Esophagus muscularis mucosa (tissue), 4 donors: ENCODE measurements at regions of chr5 and their contacts with region 1.

Region 1: GRCh38 chr5:160399402-160400353 is at the start of gene FAM200C:
- DNase-seq: peak; percentile 94
- H3K4me3 ChIP-seq: peak within 1 kb of the TSS; percentile 54 to 83 (median 76)
- H3K27ac ChIP-seq: peak within 1 kb of the TSS; percentile 84 to 93 (median 88)
- H3K4me1 ChIP-seq: peaks cover 15 to 43% (median 37%) of the 10 kb centered on the region in 4 donors
- H3K27me3 ChIP-seq: no peaks in the 10 kb centered on the region
- CTCF ChIP-seq: no peak
- EP300 ChIP-seq: no peak
- POLR2A ChIP-seq: peak; percentile 81
- total RNA-seq, gene FAM200C: 3.0 to 9.6 (median 5.8) TPM

Region 2: DNA sequence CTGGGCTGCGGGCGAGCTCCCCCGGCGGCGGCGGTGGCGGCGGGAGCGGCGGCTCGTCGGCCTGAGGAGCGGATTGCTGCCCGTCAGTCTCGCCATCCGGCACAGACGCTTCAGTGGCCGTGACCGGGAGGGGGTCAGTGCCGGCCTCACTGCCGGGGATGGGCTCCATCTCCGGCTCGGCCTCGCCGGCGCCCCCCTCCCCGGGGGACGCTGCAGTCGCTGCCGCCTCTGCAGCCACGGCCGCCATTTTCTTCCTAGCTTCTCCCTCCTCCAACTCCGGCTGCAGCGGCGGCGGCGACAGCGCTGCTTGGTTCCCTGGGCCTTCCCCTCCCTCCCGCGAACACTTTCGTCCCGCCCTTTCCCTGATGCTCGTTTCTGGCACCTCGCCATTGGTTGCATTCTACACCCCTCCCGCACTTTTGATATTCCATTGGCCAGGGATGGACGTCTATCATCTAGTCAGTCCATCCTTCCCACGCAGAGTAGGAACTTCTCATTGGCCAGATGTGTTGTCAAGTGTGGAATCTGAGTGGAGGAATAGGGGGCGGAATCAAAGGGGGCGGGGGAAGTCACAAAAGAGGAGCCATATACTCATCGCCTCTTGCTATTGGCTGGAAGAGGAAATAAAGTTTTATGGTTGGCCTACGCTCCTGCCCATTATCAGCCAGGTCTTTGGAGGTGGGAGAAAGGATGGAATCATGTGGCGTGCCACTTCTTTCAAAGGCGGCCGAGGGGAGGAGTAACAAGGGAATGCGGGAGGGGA is 280.4 kb before region 1 on chr5 and contains the start of gene PWWP2A:
- intact Hi-C with region 1: loop called (anchors 10 kb)
- DNase-seq: peak; percentile 100
- H3K4me3 ChIP-seq: peak within 1 kb of the TSS; percentile 85 to 98 (median 88)
- H3K27ac ChIP-seq: peak within 1 kb of the TSS; percentile 96 to 99 (median 98)
- H3K4me1 ChIP-seq: peaks cover 9 to 23% (median 20%) of the 10 kb centered on the region in 4 donors
- H3K27me3 ChIP-seq: no peaks in the 10 kb centered on the region
- CTCF ChIP-seq: peak in 1 of 3 experiments; percentile 25
- EP300 ChIP-seq: no peak
- POLR2A ChIP-seq: peak; percentile 63
- total RNA-seq, gene PWWP2A: 17.2 to 30.3 (median 24.2) TPM

Region 3: GRCh38 chr5:160520609-160521391 is 121.1 kb after region 1 on chr5:
- intact Hi-C with region 1: no loop called
- DNase-seq: peak; percentile 42
- H3K4me3 ChIP-seq: no peak overlapping the region
- H3K27ac ChIP-seq: no peak overlapping the region
- H3K4me1 ChIP-seq: no peaks in the 10 kb centered on the region
- H3K27me3 ChIP-seq: no peaks in the 10 kb centered on the region
- CTCF ChIP-seq: no peak
- EP300 ChIP-seq: no peak
- POLR2A ChIP-seq: no peak